Common myeloid progenitor, CD34-positive (primary cell): ENCODE measurements at regions of chr3 and their contacts with region 1.

Region 1: GRCh38 chr3:30751610-30752299 is 142.7 kb downstream of the GADL1 start:
- DNase-seq: peak; percentile 39 to 68 (median 60)
- H3K4me3 ChIP-seq: no peak overlapping the region
- H3K27ac ChIP-seq: no peak overlapping the region
- H3K4me1 ChIP-seq: peaks cover 3 to 17% (median 6%) of the 10 kb centered on the region in 4 experiments
- H3K27me3 ChIP-seq: no peaks in the 10 kb centered on the region

Region 2: DNA sequence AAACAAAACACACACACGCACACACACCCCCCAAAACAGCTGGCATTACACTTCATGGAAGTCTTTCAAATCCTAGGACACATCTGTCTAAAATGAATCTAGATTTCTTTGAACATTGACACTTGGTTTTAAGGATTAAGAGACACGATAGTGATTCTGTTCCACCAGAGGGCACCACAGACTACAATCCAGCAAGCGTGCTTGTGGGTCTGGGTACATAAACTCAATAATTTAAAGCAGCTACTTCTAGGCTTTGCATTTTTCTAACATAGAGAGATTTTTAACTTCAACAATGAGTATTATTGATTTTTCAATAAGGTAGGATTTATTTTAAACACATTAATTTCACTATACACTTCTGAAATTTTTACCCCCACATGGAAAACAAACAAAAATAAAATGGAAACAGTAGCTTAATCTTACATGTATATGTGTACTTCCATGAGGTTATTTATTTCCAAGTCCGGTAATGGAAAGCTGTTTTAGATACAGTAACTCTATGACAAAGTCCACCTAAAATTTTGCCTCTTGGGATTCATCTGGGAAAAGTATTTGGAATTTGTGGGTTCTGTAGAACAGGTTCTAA is 709.4 kb before region 1 on chr3:
- CTCF ChIA-PET with region 1: interaction called, 17 read pairs
- POLR2A ChIA-PET with region 1: no interaction called
- DNase-seq: peak; percentile 74 to 88 (median 82)
- H3K4me3 ChIP-seq: no peak overlapping the region
- H3K27ac ChIP-seq: no peak overlapping the region
- H3K4me1 ChIP-seq: peaks cover 0 to 8% (median 4%) of the 10 kb centered on the region in 4 experiments
- H3K27me3 ChIP-seq: no peaks in the 10 kb centered on the region

Region 3: GRCh38 chr3:30611613-30612436 is 139.9 kb before region 1 on chr3:
- CTCF ChIA-PET with region 1: no interaction called
- POLR2A ChIA-PET with region 1: no interaction called
- DNase-seq: peak in 2 of 3 donors; percentile 74 to 82
- H3K4me3 ChIP-seq: peak overlapping the region in 3 of 7 experiments; percentile 19 to 43 (median 39)
- H3K27ac ChIP-seq: no peak overlapping the region
- H3K4me1 ChIP-seq: peaks cover 30 to 73% (median 54%) of the 10 kb centered on the region in 4 experiments
- H3K27me3 ChIP-seq: no peaks in the 10 kb centered on the region

Region 4: DNA sequence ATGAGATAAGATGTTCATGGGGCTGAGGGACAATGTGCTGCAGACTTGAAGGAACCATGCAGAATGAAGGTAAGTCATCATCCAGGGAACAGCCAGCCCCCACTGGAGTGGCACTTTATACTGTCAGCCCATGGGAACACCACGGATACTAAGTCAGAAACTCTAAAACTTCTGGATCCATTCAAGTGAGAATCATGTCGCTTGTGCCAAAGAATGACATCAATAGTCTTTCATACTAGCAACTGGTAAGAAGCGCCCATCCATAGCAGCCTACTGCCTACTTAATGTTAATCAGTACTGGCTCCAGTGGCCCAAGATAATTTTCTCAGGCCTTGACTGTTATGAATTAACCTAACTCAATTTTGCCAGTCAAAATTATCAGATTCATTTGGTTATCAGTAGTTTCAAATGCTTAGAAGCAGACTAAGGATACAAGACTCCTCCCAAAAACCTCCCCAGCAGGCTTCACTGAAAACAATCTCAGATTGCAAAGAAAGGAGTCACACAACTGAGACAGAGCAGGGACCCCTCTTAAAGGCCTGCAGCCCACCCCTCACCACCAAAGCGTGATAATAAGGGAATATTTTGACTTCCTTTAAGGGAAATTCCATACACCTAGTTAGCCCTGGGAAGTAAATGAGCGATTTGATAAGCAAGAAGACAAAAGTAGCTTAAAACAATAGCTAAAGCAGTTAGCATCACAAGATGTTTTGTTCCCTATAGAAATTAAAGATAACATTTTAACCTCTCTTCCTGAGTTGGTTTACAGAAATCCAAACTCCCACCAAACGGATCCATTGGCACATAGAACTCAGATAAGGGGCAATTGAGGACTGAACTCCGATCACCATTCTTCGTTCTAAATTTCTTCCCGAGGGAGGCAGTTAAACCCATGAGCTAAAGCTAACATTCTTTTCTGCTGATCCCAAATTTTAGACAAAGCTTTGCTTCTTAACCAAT is 46.5 kb before region 1 on chr3:
- CTCF ChIA-PET with region 1: no interaction called
- POLR2A ChIA-PET with region 1: no interaction called
- DNase-seq: no peak
- H3K4me3 ChIP-seq: no peak overlapping the region
- H3K27ac ChIP-seq: no peak overlapping the region
- H3K4me1 ChIP-seq: no peaks in the 10 kb centered on the region
- H3K27me3 ChIP-seq: no peaks in the 10 kb centered on the region

Region 5: DNA sequence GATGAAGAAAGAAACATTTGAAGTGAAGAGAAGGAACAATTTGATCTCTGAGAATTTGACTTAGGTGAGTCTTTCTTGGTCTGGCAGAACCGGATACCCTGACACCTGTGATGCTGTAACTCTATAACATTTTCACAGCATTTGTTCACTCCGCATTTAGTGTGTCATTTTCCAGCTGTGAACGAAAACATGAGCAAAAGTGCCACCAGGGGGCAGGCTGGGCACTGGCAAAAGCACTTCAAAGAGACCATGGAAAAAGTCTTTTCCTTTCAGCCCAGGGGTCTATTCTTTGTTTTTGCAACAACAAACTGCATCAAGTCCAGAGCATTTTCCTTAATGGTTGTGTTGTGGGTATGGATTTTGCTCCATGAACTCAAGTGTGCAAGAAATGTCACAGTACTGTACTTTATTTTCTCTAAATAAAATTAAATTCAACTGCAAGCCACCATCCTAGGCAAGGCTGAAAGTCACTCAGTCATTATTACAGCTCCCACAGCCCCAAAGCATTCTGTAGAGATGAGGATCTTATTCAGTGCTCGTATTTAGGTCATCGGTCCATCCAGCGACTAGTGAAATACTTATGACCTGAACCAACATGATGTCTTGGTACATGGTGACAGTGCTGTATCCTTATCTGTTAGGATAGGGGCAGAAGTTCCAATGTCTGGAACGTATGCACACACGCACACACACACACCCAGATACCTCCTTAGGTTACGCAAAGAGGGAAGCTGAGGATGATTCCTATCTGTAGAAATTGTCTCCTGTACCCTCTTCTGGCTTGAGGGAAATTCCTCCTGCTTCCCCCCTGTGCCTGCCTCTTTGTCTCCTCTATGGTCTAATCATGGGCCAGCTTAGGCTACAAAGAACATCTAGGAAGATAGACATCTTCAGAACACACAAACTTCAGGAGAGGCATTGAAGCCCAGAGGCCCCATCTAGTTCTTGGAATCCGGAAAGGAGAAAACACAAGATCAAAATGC is 17.2 kb after region 1 on chr3:
- CTCF ChIA-PET with region 1: interaction called, 58 read pairs
- POLR2A ChIA-PET with region 1: no interaction called
- DNase-seq: peak; percentile 63 to 83 (median 74)
- H3K4me3 ChIP-seq: no peak overlapping the region
- H3K27ac ChIP-seq: no peak overlapping the region
- H3K4me1 ChIP-seq: no peaks in the 10 kb centered on the region
- H3K27me3 ChIP-seq: no peaks in the 10 kb centered on the region